Endothelial cell of umbilical vein (primary cell): ENCODE measurements at regions of chr1 and their contacts with region 1.

Region 1: GRCh38 chr1:198937231-198938031 is 298.6 kb downstream of the PTPRC start:
- DNase-seq: peak; percentile 95
- H3K4me3 ChIP-seq: peak overlapping the region; percentile 63 to 99 (median 93)
- H3K27ac ChIP-seq: peak overlapping the region; percentile 95
- H3K4me1 ChIP-seq: peaks cover 17% of the 10 kb centered on the region
- H3K27me3 ChIP-seq: no peaks in the 10 kb centered on the region
- CTCF ChIP-seq: no peak
- POLR2A ChIP-seq: peak; percentile 96

Region 2: GRCh38 chr1:198780376-198780775 is 157.1 kb before region 1 on chr1:
- CTCF ChIA-PET with region 1: interaction called, 9 read pairs
- POLR2A ChIA-PET with region 1: interaction called, 11 read pairs
- dilution Hi-C with region 1: no loop called
- intact Hi-C with region 1: loop called (anchors 1 kb)
- DNase-seq: peak; percentile 91
- H3K4me3 ChIP-seq: no peak overlapping the region
- H3K27ac ChIP-seq: peak overlapping the region; percentile 84
- H3K4me1 ChIP-seq: peaks cover 56% of the 10 kb centered on the region
- H3K27me3 ChIP-seq: no peaks in the 10 kb centered on the region
- CTCF ChIP-seq: no peak
- POLR2A ChIP-seq: no peak

Region 3: GRCh38 chr1:198892065-198892464 is 45.4 kb before region 1 on chr1:
- CTCF ChIA-PET with region 1: interaction called, 7 read pairs
- POLR2A ChIA-PET with region 1: interaction called, 7 read pairs
- dilution Hi-C with region 1: no loop called
- intact Hi-C with region 1: loop called (anchors 1 kb)
- DNase-seq: peak; percentile 87
- H3K4me3 ChIP-seq: no peak overlapping the region
- H3K27ac ChIP-seq: peak overlapping the region; percentile 74
- H3K4me1 ChIP-seq: peaks cover 44% of the 10 kb centered on the region
- H3K27me3 ChIP-seq: no peaks in the 10 kb centered on the region
- CTCF ChIP-seq: no peak
- POLR2A ChIP-seq: no peak

Region 4: DNA sequence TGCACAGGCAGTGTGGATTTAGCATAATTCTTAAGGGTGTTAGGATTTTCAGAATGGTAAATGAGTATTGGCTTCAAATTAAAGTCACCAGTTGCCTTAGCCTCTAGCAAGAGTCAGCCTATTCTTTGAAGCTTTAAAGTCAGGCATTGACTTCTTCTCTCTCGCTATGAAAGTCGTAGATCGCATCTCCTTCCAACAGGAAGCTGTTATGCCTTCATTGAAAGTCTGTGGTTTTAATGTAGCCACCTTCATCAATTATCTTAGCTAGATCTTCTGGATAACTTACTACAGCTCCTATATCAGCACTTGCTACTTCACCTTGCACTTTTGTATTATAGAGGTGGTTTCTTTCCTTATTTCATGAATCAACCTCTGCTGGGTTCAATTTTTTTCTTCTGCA is 21.6 kb after region 1 on chr1:
- CTCF ChIA-PET with region 1: no interaction called
- POLR2A ChIA-PET with region 1: no interaction called
- dilution Hi-C with region 1: no loop called
- intact Hi-C with region 1: no loop called
- DNase-seq: no peak
- H3K4me3 ChIP-seq: no peak overlapping the region
- H3K27ac ChIP-seq: no peak overlapping the region
- H3K4me1 ChIP-seq: no peaks in the 10 kb centered on the region
- H3K27me3 ChIP-seq: no peaks in the 10 kb centered on the region
- CTCF ChIP-seq: no peak
- POLR2A ChIP-seq: no peak

Region 5: GRCh38 chr1:199113265-199113869 is 175.9 kb after region 1 on chr1:
- CTCF ChIA-PET with region 1: interaction called, 28 read pairs
- POLR2A ChIA-PET with region 1: interaction called, 3 read pairs
- dilution Hi-C with region 1: no loop called
- intact Hi-C with region 1: loop called (anchors 2 kb)
- DNase-seq: peak; percentile 85
- H3K4me3 ChIP-seq: no peak overlapping the region
- H3K27ac ChIP-seq: no peak overlapping the region
- H3K4me1 ChIP-seq: no peaks in the 10 kb centered on the region
- H3K27me3 ChIP-seq: no peaks in the 10 kb centered on the region
- CTCF ChIP-seq: peak; percentile 81 to 83
- POLR2A ChIP-seq: no peak

Region 6: DNA sequence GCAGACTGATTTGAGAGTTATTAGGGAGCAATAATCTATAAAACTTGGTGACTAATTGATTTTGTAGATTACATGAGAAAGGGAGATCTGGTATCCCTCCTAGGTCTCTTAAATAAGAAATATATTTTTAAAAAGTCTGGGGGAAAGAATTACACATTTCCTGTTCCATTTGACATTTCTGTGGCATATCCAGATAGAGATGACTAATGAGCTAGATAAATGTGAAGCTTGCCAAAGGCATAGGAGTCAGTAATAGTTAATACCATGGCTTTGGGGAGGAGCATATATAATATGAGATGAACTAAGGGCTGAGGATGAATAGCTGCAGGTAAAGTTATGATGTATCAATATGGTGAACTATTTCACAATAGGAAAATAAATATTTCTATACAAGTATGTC is 365.1 kb after region 1 on chr1:
- CTCF ChIA-PET with region 1: no interaction called
- POLR2A ChIA-PET with region 1: no interaction called
- dilution Hi-C with region 1: no loop called
- intact Hi-C with region 1: loop called (anchors 10 kb)
- DNase-seq: peak; percentile 85
- H3K4me3 ChIP-seq: no peak overlapping the region
- H3K27ac ChIP-seq: peak overlapping the region; percentile 61
- H3K4me1 ChIP-seq: peaks cover 37% of the 10 kb centered on the region
- H3K27me3 ChIP-seq: no peaks in the 10 kb centered on the region
- CTCF ChIP-seq: no peak
- POLR2A ChIP-seq: no peak

Region 7: DNA sequence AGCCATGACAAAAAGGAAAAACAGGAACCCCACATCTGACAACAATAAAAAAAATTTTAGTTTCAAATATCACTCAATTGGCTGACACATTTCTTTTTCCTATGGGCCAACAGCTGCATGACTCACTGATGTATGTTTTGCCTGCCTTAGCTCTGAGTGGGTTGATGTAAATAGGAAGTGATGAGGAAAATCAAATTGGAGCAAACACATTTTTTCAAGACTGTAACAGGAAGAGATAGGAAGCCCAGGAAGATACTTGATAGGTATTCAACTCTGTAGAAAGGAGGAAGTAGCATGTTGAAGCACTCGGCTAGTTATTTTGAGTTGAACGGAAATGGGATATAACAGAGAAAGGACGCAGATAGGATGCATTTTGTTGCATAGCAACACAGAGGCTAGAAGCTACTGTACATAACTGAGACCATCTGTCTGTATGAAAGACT is 922.1 kb after region 1 on chr1:
- CTCF ChIA-PET with region 1: no interaction called
- POLR2A ChIA-PET with region 1: no interaction called
- dilution Hi-C with region 1: no loop called
- intact Hi-C with region 1: loop called (anchors 5 kb)
- DNase-seq: peak; percentile 97
- H3K4me3 ChIP-seq: no peak overlapping the region
- H3K27ac ChIP-seq: peak overlapping the region; percentile 31
- H3K4me1 ChIP-seq: peaks cover 42% of the 10 kb centered on the region
- H3K27me3 ChIP-seq: no peaks in the 10 kb centered on the region
- CTCF ChIP-seq: no peak
- POLR2A ChIP-seq: no peak